GM10248 (cell line): ENCODE measurements at regions of chr12 and their contacts with region 1.

Region 1: GRCh38 chr12:12032851-12033588 is 37.7 kb upstream of the BCL2L14 start:
- DNase-seq: peak; percentile 57
- CTCF ChIP-seq: peak; percentile 81

Region 2: DNA sequence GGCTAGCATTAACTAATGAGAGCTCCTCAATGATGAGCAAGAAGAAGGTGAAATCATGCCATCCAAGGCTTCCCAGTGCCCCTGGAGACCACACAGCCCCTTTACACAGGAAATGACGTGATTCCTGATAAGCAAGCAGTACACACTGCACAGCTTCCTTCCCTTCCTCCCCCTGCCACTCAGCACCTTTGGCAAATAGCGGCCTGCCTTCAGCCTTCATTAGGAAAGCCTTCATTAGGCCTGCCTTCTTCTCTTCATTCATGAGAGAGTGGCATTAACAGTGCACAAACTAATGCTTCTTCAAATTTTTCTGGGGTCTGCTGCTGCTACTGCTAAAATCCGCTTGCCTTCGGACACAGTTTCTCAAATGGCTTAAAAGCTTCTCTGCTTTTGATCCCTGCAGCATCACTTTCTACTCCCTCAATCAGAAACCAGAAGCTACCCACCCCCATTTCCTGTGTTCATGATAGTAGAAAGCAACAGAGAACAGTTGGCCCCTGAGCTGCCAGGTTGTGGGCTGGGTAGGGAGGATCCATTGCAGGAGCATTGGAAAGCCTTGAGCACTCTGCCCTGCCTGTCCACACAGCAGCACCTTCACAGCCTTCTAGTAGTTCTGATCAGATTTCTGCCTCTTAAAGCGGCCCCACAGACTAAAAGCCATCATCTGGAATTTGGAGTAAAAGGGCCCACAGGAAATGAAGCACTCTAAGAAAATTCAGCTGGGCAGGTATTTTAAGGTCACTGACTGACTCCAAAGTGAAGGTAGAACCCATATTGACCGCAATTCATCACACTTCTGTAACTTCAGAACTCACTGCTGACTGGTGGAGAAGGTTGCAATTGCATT is 487.3 kb before region 1 on chr12:
- CTCF ChIA-PET with region 1: interaction called, 12 read pairs
- POLR2A ChIA-PET with region 1: no interaction called
- DNase-seq: peak; percentile 68
- CTCF ChIP-seq: no peak

Region 3: DNA sequence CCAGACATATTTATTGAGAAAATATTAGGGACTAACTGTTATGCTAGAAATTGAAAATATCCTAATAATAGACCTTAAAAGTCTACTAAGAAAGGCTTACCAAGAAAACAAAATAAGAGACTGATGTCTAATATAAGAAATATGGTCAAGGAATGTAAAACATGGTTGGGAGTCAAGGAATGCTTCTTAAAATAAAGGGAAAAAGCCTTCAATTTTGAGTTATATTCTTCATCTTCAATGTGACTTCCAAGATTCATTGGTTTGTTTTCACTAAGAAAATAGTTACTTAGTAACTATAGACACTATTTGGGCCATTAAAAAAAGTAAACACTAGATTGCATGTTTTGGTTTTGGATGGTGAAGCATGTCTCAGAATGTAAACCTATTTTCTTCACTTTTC is 471.6 kb before region 1 on chr12:
- CTCF ChIA-PET with region 1: interaction called, 23 read pairs
- POLR2A ChIA-PET with region 1: no interaction called
- DNase-seq: no peak
- CTCF ChIP-seq: no peak

Region 4: GRCh38 chr12:11716794-11717518 is 316.1 kb before region 1 on chr12:
- CTCF ChIA-PET with region 1: interaction called, 11 read pairs
- POLR2A ChIA-PET with region 1: no interaction called
- DNase-seq: no peak
- CTCF ChIP-seq: no peak

Region 5: DNA sequence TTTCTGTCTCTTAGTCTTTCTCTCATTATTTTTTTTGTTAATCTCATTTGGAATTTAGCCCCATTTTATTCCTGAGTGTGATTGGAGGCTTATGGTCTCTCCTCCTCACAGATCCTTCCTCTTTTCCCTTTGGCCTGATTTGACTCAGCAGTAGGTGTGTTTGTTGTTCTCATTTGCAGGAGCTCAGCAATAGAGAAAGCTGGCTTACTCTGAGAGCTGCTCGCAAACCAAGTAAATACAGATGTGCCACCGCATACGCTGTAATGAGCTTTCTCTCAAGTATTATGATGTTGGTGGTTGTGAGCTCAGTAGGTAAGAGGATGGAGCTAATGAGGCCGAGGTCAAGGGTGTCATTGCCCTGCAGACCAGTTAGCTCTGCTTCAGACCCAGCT is 177.0 kb before region 1 on chr12:
- CTCF ChIA-PET with region 1: interaction called, 10 read pairs
- POLR2A ChIA-PET with region 1: no interaction called
- DNase-seq: peak; percentile 40
- CTCF ChIP-seq: no peak

Region 6: DNA sequence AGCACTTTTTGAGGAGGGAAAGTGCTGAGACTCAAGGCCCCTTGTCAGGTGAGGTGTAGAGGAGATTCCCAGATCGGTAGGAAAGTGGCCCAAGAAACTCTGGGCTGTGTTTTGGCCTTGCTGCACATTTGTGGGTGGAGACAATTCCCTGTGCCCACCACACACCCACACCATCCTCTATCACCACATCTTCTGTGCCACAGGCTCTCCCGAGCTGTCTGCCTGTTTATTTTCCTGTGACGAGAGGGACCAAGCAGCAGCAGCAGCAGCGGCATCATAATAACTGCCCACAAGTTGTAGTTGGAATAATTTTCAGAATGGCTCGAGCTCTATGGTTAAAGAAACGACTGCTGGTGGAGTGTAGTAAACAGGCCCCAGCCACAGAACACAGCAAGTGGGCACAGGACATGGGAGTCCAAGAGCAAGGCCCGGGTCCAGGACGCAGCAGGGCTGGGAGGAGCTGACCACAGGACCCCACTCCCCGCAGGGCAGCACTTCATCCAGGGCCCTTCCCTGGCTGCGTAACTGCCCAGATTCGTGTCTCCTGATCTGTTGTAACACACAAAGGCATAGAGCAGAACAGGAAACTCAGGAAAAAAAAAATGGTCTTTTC is 17.8 kb before region 1 on chr12:
- CTCF ChIA-PET with region 1: interaction called, 33 read pairs
- POLR2A ChIA-PET with region 1: no interaction called
- DNase-seq: no peak
- CTCF ChIP-seq: no peak

Region 7: GRCh38 chr12:12046401-12046800 is 13.4 kb after region 1 on chr12:
- CTCF ChIA-PET with region 1: interaction called, 14 read pairs
- POLR2A ChIA-PET with region 1: interaction called, 11 read pairs
- DNase-seq: no peak
- CTCF ChIP-seq: no peak

Region 8: GRCh38 chr12:12099102-12099501 is 66.1 kb after region 1 on chr12:
- CTCF ChIA-PET with region 1: no interaction called
- POLR2A ChIA-PET with region 1: no interaction called
- DNase-seq: no peak
- CTCF ChIP-seq: no peak

Region 9: GRCh38 chr12:12115514-12115913 is 82.5 kb after region 1 on chr12:
- CTCF ChIA-PET with region 1: no interaction called
- POLR2A ChIA-PET with region 1: no interaction called
- DNase-seq: no peak
- CTCF ChIP-seq: no peak

Region 10: GRCh38 chr12:12194206-12194605 is 161.2 kb after region 1 on chr12:
- CTCF ChIA-PET with region 1: no interaction called
- POLR2A ChIA-PET with region 1: no interaction called
- DNase-seq: no peak
- CTCF ChIP-seq: no peak